OCI-LY7 (cell line): ENCODE measurements at regions of chr19 and their contacts with region 1.

Region 1: GRCh38 chr19:17448131-17448967 is at the start of gene TMEM221:
- DNase-seq: peak; percentile 18
- H3K4me3 ChIP-seq: no peak within 1 kb of the TSS
- H3K27ac ChIP-seq: no peak within 1 kb of the TSS
- H3K4me1 ChIP-seq: peaks cover 11% of the 10 kb centered on the region
- CTCF ChIP-seq: peak; percentile 70
- total RNA-seq, gene TMEM221: not detected in 2 replicates

Region 2: DNA sequence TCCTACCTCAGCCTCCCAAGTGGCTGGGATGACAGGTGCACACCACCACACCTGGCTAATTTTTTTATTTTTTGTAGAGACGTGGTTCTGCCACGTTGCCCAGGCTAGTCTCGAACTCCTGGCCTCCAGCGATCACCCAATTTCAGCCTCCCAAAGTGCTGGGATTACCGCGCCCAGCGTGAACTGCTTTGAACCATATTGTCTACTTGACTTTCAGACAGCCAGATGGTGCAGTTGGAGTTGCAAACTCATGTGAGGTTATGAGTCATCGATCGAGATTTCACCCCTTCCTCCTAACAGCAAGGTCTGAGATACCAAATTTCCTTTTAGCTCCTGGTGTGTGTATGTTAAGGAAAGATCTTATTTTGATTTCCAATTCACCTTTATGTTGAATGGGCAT is 24.7 kb after region 1 on chr19:
- CTCF ChIA-PET with region 1: no interaction called
- POLR2A ChIA-PET with region 1: no interaction called
- intact Hi-C with region 1: no loop called
- DNase-seq: no peak
- H3K4me3 ChIP-seq: no peak overlapping the region
- H3K27ac ChIP-seq: no peak overlapping the region
- H3K4me1 ChIP-seq: peaks cover 20% of the 10 kb centered on the region
- CTCF ChIP-seq: no peak

Region 3: GRCh38 chr19:17616961-17617806 is 168.8 kb after region 1 on chr19:
- CTCF ChIA-PET with region 1: no interaction called
- POLR2A ChIA-PET with region 1: no interaction called
- intact Hi-C with region 1: loop called (anchors 1 kb)
- DNase-seq: peak; percentile 22
- H3K4me3 ChIP-seq: no peak overlapping the region
- H3K27ac ChIP-seq: no peak overlapping the region
- H3K4me1 ChIP-seq: peaks cover 10% of the 10 kb centered on the region
- CTCF ChIP-seq: no peak